ENCODE measurements at regions of chrX and their contacts with region 1.

Region 1: DNA sequence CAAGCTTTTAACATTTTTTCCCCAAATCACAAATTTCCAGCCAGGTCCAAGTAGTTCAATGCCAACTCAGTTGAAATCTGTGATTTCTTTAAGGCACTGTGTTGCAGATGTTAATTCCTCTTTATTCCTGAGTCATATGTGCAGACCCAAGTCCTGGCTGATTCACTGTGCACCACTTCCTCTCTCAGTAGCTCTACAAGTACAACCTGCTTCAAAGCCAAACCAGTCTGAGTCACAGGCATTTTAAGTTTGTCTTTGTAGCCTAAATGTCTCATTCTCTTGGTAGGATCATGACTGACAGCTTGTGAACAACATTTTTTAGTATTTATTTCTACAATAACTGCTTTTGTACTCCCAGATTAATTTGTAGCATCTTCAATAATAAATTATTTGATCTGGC is 165.6 kb upstream of the S100G start:
- DNase-seq: peak; percentile 56
- H3K4me3 Mint-ChIP-seq: no peak overlapping the region
- H3K27ac Mint-ChIP-seq: peak overlapping the region; percentile 31
- H3K4me1 Mint-ChIP-seq: peaks cover 27% of the 10 kb centered on the region
- H3K27me3 Mint-ChIP-seq: no peaks in the 10 kb centered on the region

Region 2: GRCh38 chrX:16528620-16529019 is 44.3 kb after region 1 on chrX:
- CTCF ChIA-PET with region 1: no interaction called
- POLR2A ChIA-PET with region 1: interaction called, 3 read pairs
- intact Hi-C with region 1: loop called (anchors 2 kb)
- DNase-seq: peak; percentile 63
- H3K4me3 Mint-ChIP-seq: no peak overlapping the region
- H3K27ac Mint-ChIP-seq: peak overlapping the region; percentile 89
- H3K4me1 Mint-ChIP-seq: peaks cover 30% of the 10 kb centered on the region
- H3K27me3 Mint-ChIP-seq: no peaks in the 10 kb centered on the region

Region 3: GRCh38 chrX:16603822-16604221 is 119.5 kb after region 1 on chrX:
- CTCF ChIA-PET with region 1: no interaction called
- POLR2A ChIA-PET with region 1: no interaction called
- intact Hi-C with region 1: loop called (anchors 2 kb)
- DNase-seq: peak; percentile 9
- H3K4me3 Mint-ChIP-seq: peak overlapping the region; percentile 10
- H3K27ac Mint-ChIP-seq: peak overlapping the region; percentile 84
- H3K4me1 Mint-ChIP-seq: peaks cover 28% of the 10 kb centered on the region
- H3K27me3 Mint-ChIP-seq: no peaks in the 10 kb centered on the region

Measured in activated CD4-positive, alpha-beta memory T cell treated with anti-CD3 and anti-CD28 coated beads for 36 hours (primary cell).